Activated CD4-positive, alpha-beta memory T cell treated with anti-CD3 and anti-CD28 coated beads for 36 hours (primary cell): ENCODE measurements at regions of chr2 and their contacts with region 1.

Region 1: GRCh38 chr2:174697255-174697654 is 67.0 kb downstream of the CHRNA1 start:
- DNase-seq: peak; percentile 78
- H3K4me3 Mint-ChIP-seq: no peak overlapping the region
- H3K27ac Mint-ChIP-seq: no peak overlapping the region
- H3K4me1 Mint-ChIP-seq: no peaks in the 10 kb centered on the region
- H3K27me3 Mint-ChIP-seq: no peaks in the 10 kb centered on the region

Region 2: DNA sequence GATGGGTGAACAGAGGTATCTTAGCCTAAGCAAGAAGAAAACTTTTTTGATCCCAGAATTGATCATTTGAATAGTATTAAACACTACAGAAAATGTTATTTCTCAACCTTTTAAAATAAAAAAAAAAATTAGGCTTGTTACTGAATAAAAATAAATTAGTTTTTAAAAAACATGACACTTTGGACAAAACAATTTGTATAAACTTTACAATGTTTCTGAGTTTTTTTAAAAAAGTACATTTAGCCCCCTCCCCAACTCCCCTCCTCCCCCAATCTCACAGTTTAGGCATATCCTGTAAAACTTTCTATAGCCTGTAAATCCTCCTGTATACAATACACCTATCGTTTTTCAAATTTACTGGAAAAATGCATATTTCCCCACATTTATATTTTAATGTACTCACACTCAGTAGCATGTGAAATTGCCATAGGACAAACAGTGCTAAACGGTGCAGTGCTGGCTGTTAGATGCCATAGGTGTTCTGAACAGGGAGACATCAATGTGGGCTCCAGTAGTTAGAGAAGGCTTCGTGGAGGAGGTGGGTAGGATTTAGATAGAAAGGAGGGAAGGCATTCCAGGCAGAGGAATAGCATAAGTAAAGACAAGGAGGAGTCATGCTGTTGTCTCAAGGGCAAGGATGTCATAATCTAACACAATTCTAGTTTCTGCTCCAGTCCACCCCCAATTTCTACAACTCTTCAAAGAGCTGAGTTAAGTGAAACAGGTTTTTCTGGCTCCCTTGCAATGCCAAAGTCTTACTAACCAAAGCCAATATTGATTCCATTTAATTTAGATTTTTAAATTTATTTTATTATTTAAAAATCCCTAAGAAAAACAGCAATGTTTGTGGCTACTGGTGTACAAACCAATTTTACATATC is 783.0 kb before region 1 on chr2:
- CTCF ChIA-PET with region 1: no interaction called
- POLR2A ChIA-PET with region 1: no interaction called
- intact Hi-C with region 1: no loop called
- DNase-seq: no peak
- H3K4me3 Mint-ChIP-seq: no peak overlapping the region
- H3K27ac Mint-ChIP-seq: no peak overlapping the region
- H3K4me1 Mint-ChIP-seq: peaks cover 18% of the 10 kb centered on the region
- H3K27me3 Mint-ChIP-seq: no peaks in the 10 kb centered on the region

Region 3: DNA sequence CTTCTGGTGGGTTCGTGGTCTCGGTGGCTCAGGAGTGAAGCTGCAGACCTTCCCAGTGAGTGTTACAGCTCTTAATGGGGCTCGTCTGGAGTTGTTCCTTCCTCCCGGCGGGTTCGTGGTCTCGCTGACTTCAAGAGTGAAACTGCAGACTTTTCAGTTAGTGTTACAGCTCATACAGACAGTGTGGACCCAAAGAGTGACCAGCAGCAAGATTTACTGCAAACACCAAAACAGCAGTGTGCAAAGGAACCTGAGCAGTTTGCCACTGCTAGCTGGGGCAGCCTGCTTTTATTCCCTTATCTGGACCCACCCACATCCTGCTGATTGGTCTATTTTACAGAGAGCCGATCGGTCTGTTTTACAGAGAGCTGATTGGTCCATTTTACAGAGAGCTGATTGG is 11.5 kb after region 1 on chr2:
- CTCF ChIA-PET with region 1: interaction called, 12 read pairs
- POLR2A ChIA-PET with region 1: no interaction called
- intact Hi-C with region 1: no loop called
- DNase-seq: no peak
- H3K4me3 Mint-ChIP-seq: no peak overlapping the region
- H3K27ac Mint-ChIP-seq: no peak overlapping the region
- H3K4me1 Mint-ChIP-seq: no peaks in the 10 kb centered on the region
- H3K27me3 Mint-ChIP-seq: peaks cover 5% of the 10 kb centered on the region

Region 4: DNA sequence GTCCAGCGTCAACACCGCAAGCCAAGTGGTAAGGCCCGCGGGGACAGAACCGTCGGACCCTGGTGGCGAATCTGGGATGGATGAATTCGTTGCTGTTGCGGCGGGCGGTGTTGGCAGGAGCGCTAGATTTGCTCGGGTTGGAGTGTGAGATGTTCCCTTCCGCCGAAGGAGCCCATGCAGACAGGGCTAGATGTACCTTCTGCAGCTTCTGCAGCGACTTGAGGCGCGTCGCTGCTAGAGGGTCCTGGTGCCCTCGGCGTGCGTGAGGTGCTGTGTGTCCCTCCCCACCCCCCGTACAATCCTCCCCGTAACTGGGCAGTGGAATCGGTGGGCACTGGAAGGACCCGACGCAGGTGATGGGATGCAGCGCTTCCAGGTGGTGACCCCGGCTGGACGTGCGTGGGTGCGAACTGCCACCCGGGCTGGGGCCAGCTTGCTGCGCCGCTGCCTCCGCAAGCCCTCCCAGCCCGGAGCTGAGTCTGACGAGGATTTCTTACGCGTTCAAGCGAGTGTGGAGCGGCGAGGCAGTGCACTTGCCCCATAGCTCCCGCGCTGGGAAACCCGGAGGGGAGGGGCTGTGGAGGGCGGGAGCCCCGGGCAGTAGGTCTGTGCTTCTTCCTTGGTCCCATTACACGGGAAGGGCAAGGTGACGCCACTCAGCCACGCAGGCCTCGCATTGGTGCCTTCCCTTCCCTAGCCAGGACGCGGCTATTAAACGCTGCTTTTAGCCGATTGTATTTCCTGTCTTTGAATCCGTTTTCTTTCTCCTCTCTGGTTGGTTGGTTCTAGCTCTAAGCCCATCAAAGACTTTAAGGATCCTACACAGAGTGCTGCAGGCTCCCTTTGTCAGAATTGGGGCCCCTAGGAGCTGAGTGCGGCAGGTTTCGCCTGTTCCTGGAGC is 32.8 kb after region 1 on chr2:
- CTCF ChIA-PET with region 1: interaction called, 14 read pairs
- POLR2A ChIA-PET with region 1: no interaction called
- intact Hi-C with region 1: loop called (anchors 2 kb)
- DNase-seq: peak; percentile 69
- H3K4me3 Mint-ChIP-seq: peak overlapping the region; percentile 77
- H3K27ac Mint-ChIP-seq: no peak overlapping the region
- H3K4me1 Mint-ChIP-seq: peaks cover 9% of the 10 kb centered on the region
- H3K27me3 Mint-ChIP-seq: peaks cover 3% of the 10 kb centered on the region

Region 5: GRCh38 chr2:174796319-174796771 is 99.1 kb after region 1 on chr2:
- CTCF ChIA-PET with region 1: no interaction called
- POLR2A ChIA-PET with region 1: no interaction called
- intact Hi-C with region 1: no loop called
- DNase-seq: no peak
- H3K4me3 Mint-ChIP-seq: no peak overlapping the region
- H3K27ac Mint-ChIP-seq: no peak overlapping the region
- H3K4me1 Mint-ChIP-seq: peaks cover 24% of the 10 kb centered on the region
- H3K27me3 Mint-ChIP-seq: peaks cover 3% of the 10 kb centered on the region

Region 6: DNA sequence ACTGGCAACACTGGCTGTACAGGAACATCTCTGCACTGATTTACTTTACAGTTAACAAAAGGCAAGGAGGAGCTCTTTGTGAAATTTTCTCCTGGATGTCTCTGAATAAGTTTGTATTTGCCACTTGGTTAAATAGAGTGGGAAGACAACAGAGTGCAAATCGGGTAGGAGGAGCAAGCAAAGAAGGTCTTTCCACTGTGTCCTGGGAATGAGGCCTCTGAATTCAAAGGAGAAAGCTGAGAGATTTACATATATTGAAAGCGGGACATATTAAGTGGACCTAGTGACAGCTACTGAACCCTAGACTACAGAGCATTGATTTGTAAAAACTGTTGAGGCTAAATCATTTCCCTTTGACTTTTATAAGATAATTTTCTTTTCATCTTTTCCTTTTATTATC is 184.4 kb after region 1 on chr2:
- CTCF ChIA-PET with region 1: no interaction called
- POLR2A ChIA-PET with region 1: no interaction called
- intact Hi-C with region 1: no loop called
- DNase-seq: no peak
- H3K4me3 Mint-ChIP-seq: no peak overlapping the region
- H3K27ac Mint-ChIP-seq: no peak overlapping the region
- H3K4me1 Mint-ChIP-seq: no peaks in the 10 kb centered on the region
- H3K27me3 Mint-ChIP-seq: no peaks in the 10 kb centered on the region

Region 7: GRCh38 chr2:174985630-174986029 is 288.4 kb after region 1 on chr2:
- CTCF ChIA-PET with region 1: interaction called, 18 read pairs
- POLR2A ChIA-PET with region 1: interaction called, 4 read pairs
- intact Hi-C with region 1: loop called (anchors 1 kb)
- DNase-seq: no peak
- H3K4me3 Mint-ChIP-seq: no peak overlapping the region
- H3K27ac Mint-ChIP-seq: no peak overlapping the region
- H3K4me1 Mint-ChIP-seq: peaks cover 2% of the 10 kb centered on the region
- H3K27me3 Mint-ChIP-seq: peaks cover 3% of the 10 kb centered on the region

Region 8: GRCh38 chr2:175111200-175111657 is 414.0 kb after region 1 on chr2:
- CTCF ChIA-PET with region 1: interaction called, 11 read pairs
- POLR2A ChIA-PET with region 1: no interaction called
- intact Hi-C with region 1: no loop called
- DNase-seq: no peak
- H3K4me3 Mint-ChIP-seq: no peak overlapping the region
- H3K27ac Mint-ChIP-seq: no peak overlapping the region
- H3K4me1 Mint-ChIP-seq: no peaks in the 10 kb centered on the region
- H3K27me3 Mint-ChIP-seq: no peaks in the 10 kb centered on the region